Posterior vena cava (tissue), 2 donors: ENCODE measurements at regions of chr19 and their contacts with region 1.

Region 1: DNA sequence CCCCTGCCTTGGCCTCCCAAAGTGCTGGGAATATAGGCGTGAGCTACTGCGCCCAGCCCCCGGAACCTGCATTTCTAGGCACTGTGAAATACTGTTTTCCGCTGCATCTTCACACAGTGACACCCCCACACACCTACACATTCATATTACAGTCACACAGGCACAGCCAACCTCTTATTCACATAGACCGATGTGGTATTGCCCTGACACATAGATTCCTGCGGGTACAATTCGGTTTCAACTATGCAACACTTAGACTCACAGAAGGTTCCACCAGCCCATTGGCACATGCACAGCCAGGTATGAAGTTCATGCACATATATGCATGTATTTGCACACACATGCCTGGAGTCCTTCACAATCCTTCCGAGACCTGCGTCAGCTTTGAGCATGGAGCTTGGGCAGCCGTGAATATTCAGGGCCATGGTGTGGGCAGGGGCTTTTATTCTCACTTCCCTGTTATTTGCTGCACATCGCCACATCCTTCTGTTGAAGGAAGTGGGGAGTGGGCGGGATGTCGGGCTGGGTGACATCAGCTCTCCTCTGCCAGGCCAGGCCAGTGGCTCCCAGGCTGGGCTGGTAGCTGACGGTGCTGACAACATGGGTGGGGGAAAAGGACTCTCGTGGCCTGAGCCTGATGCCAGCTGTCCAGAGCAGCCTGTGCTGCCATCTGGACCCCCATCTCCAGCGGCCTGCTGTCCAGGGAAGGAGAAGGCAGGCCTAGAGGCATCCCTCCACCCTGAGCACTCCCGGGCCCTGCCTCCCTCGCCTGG is 5.4 kb upstream of the CDC37 start:
- DNase-seq: no peak

Region 2: GRCh38 chr19:10422846-10423245 is 14.1 kb after region 1 on chr19:
- intact Hi-C with region 1: loop called in 1 of 2 experiments (anchors 1 kb)
- DNase-seq: no peak